Panc1 (cell line): ENCODE measurements at regions of chr13 and their contacts with region 1.

Region 1: DNA sequence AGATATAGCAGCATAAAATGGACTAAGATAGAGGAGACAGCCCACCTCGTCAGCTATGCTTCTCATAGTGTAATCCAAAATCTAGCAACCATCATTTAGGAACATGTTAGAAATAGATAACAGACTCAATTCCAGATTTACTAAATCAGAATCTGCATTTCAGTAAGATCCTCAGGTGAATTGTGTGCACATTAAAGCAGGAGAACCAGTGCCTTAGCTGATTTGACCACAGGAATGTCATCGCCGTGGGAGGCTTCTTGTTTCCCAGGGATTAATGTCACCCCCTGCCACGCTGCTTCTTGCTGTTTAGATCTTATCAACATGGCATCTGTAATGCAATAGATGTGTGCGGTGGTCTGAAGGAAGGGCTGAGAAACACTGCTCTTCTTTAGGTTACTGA is 84.0 kb downstream of the GPC5 start:
- DNase-seq: no peak
- ATAC-seq: no peak
- H3K4me3 ChIP-seq: no peak overlapping the region
- H3K27ac ChIP-seq: no peak overlapping the region
- H3K4me1 ChIP-seq: no peaks in the 10 kb centered on the region
- H3K27me3 ChIP-seq: no peaks in the 10 kb centered on the region
- CTCF ChIP-seq: no peak

Region 2: DNA sequence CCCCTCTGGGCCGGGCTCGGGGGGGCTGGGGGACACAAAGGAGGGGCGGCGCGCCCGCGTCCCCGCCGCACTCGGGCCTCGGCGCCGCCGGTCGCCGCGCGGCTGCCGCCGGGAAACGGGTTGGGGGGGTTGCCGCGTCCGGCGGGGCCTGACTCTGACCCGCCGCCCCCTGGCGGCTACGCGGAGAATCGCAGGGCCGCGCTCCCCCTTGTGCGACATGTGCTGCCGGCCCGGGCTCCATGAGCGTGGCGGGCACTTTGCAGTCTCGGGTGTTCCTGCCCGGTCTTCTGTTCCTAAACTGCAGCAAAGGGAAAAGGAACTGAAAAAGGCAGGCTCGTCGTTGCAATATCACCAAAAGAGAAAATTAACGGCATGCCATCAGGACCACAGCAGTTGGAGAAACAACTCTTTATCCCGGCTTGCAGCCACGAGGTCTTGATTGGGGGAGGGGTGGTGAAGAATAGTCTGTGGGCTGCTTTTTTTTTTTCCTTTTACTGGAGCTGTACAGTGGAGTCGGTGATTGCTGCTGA is 133.5 kb before region 1 on chr13:
- CTCF ChIA-PET with region 1: no interaction called
- POLR2A ChIA-PET with region 1: interaction called, 12 read pairs
- in situ Hi-C with region 1: no loop called
- intact Hi-C with region 1: no loop called
- DNase-seq: peak; percentile 69
- ATAC-seq: peak; percentile 78
- H3K4me3 ChIP-seq: peak overlapping the region; percentile 67 to 74
- H3K27ac ChIP-seq: peak overlapping the region; percentile 90
- H3K4me1 ChIP-seq: peaks cover 9% of the 10 kb centered on the region
- H3K27me3 ChIP-seq: peaks cover 7% of the 10 kb centered on the region; the same call in 1 of the 2 replicates
- CTCF ChIP-seq: peak; percentile 92

Region 3: GRCh38 chr13:91369441-91369831 is 113.0 kb before region 1 on chr13:
- CTCF ChIA-PET with region 1: no interaction called
- POLR2A ChIA-PET with region 1: no interaction called
- in situ Hi-C with region 1: no loop called
- intact Hi-C with region 1: no loop called
- DNase-seq: no peak
- ATAC-seq: no peak
- H3K4me3 ChIP-seq: no peak overlapping the region
- H3K27ac ChIP-seq: no peak overlapping the region
- H3K4me1 ChIP-seq: no peaks in the 10 kb centered on the region
- H3K27me3 ChIP-seq: no peaks in the 10 kb centered on the region
- CTCF ChIP-seq: no peak